CD4-positive, alpha-beta memory T cell (primary cell): ENCODE measurements at regions of chr13 and their contacts with region 1.

Region 1: DNA sequence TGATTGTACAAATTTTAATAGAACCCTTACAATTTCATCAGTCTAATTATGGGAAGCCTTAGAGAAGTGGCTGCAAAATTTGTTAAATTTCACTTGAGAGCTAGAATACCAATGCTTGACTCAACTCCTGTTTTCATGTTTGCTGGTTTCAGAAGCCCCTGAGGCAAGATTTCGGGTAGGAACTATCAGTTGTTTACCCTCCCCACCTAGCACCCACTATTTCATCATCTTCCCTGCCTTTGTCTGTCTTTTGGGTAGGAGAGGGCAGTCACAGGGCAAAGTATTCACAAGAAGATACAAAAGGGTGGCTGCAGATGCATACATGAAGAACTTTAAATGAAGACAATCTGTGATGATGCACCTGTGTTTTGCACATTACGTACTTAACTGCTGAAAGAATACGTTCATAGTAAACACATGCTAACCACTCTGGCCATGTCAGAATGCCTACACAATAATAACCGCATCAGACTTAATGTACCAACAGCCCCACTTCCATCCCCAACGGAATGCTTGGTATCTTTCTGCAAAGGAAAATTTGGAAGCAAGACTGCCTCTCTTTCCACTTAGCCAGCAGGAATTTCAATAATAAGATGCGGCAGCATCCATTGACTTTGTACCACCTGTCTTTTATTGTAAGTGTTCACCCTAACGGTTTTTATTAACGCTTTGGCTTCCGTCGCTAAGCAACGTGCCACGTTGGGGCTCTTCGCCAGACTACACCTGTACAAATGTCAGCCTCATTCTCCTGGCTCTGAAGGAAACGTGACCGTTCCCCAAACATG is 30.4 kb downstream of the TPT1 start:
- DNase-seq: no peak
- H3K4me3 ChIP-seq: peak overlapping the region; percentile 47 to 56
- H3K4me3 Mint-ChIP-seq: peak overlapping the region; percentile 88 to 94 (median 91)
- H3K27ac ChIP-seq: no peak overlapping the region
- H3K27ac Mint-ChIP-seq: peak overlapping the region in 3 of 7 donors; percentile 35 to 87 (median 36)
- H3K4me1 ChIP-seq: peaks cover 19% of the 10 kb centered on the region
- H3K4me1 Mint-ChIP-seq: peaks cover 12 to 22% (median 17%) of the 10 kb centered on the region in 4 donors
- H3K27me3 ChIP-seq: no peaks in the 10 kb centered on the region
- H3K27me3 Mint-ChIP-seq: peaks cover 3 to 5% of the 10 kb centered on the region in 2 donors

Region 2: GRCh38 chr13:44969551-44970484 is 340.7 kb before region 1 on chr13:
- CTCF ChIA-PET with region 1: interaction called, 4 read pairs
- POLR2A ChIA-PET with region 1: no interaction called
- intact Hi-C with region 1: loop called (anchors 1 kb)
- DNase-seq: peak in 4 of 5 donors; percentile 13 to 28 (median 18)
- H3K4me3 ChIP-seq: no peak overlapping the region
- H3K4me3 Mint-ChIP-seq: no peak overlapping the region
- H3K27ac ChIP-seq: no peak overlapping the region
- H3K27ac Mint-ChIP-seq: no peak overlapping the region
- H3K4me1 ChIP-seq: no peaks in the 10 kb centered on the region
- H3K4me1 Mint-ChIP-seq: peaks cover 0 to 1% (median under 1%) of the 10 kb centered on the region in 4 donors
- H3K27me3 ChIP-seq: no peaks in the 10 kb centered on the region
- H3K27me3 Mint-ChIP-seq: no peaks in the 10 kb centered on the region

Region 3: DNA sequence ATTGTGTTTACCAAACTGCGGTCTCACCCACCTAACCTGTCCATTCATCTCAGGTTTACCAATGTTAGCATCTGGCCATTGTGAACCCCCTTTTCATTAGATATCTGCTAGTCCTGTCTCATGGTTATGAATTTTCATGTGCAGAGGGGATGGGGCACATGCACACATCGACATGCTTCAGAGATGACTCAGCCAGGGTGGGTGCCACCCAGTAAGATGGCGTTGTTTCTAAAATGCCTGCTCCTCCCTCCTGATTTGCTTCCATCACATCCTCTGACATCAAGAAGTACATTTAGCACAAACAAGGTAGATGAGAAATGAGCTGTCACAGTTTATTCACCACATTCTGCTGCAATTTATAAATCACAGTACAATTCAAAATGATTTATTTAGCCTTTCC is 269.9 kb before region 1 on chr13:
- CTCF ChIA-PET with region 1: interaction called, 146 read pairs
- POLR2A ChIA-PET with region 1: no interaction called
- intact Hi-C with region 1: no loop called
- DNase-seq: no peak
- H3K4me3 ChIP-seq: no peak overlapping the region
- H3K4me3 Mint-ChIP-seq: no peak overlapping the region
- H3K27ac ChIP-seq: no peak overlapping the region
- H3K27ac Mint-ChIP-seq: no peak overlapping the region
- H3K4me1 ChIP-seq: no peaks in the 10 kb centered on the region
- H3K4me1 Mint-ChIP-seq: no peaks in the 10 kb centered on the region
- H3K27me3 ChIP-seq: no peaks in the 10 kb centered on the region
- H3K27me3 Mint-ChIP-seq: peaks cover 2 to 4% of the 10 kb centered on the region in 2 donors

Region 4: DNA sequence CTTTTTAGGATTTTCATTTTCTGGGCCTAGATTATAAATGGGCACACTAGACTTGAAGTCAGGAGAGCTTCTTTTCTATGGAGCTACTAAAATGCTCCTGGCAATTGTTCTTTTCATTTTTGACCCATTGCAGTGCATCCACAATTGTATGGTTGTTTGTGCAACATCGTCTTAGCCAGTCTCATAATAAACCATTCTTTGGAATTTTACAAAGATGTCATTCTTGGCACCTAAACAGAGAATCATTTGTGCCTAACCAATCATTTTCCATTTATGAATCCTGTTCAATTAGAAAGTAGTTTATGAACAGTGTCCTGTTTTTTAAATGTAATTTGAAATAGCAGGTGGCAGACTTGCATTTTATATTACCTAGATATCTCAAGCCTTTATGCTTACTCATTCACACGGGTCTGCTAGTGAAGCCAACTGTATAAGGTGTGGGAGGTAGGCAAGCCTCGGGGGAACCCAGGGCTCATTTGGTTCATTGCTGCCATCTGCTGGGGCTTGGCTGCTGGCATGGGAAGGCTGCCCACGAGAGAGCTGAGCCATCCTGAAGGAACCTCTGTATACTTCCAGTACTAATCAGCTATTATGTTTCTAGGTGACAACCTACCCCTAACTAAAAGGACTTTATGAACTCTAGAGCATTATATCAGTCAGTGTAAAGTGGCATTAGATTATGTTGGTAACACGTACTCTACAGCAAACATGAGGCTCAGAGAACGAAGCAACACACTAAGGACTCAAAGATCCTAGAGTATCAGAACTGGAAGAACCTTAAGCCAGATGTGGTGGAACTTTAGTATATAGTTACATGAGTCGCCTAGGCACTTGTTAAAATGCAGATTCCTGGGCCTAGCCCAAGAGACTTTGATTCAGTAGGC is 29.5 kb before region 1 on chr13:
- CTCF ChIA-PET with region 1: interaction called, 11 read pairs
- POLR2A ChIA-PET with region 1: no interaction called
- intact Hi-C with region 1: no loop called
- DNase-seq: peak in 3 of 5 donors; percentile 15 to 26 (median 17)
- H3K4me3 ChIP-seq: no peak overlapping the region
- H3K4me3 Mint-ChIP-seq: no peak overlapping the region
- H3K27ac ChIP-seq: no peak overlapping the region
- H3K27ac Mint-ChIP-seq: no peak overlapping the region
- H3K4me1 ChIP-seq: no peaks in the 10 kb centered on the region
- H3K4me1 Mint-ChIP-seq: peaks cover 0 to 2% (median 0%) of the 10 kb centered on the region in 4 donors
- H3K27me3 ChIP-seq: no peaks in the 10 kb centered on the region
- H3K27me3 Mint-ChIP-seq: no peaks in the 10 kb centered on the region

Region 5: DNA sequence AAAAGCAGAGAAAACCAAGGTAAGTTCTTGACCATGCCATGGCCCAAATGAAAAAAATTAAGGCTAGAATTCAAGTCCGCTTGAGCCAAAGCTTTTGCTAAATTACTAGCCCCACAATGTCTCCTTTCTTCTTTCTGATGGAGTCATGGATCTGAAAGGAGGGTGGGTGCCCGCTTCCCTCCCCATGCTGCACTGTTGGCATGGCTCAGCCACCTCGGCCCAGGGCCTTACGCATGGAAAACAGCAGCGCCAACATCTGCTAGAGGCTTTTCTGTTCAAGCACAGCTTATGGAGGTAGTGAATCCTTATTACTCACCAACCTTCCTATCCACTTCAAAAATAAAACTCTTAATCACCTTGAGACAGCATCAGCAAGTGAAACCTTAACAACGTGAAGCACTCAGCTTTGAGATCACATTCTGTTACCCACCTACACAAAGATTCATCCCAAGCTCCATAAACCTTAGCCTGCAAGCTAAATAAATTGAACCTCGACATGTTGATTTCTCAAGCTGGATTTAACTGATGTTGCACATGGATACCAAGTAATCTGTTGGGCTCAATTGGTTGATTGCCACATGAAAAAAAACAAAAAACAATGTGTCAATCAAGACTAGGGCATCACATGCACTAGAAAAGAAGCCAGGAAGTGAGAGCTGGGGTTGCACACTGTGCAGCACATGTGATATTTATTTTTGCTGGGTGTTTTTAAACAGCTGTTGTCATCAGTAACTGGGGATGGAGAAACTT is 12.9 kb before region 1 on chr13:
- CTCF ChIA-PET with region 1: interaction called, 43 read pairs
- POLR2A ChIA-PET with region 1: interaction called, 4 read pairs
- intact Hi-C with region 1: no loop called
- DNase-seq: peak in 4 of 5 donors; percentile 45 to 56 (median 50)
- H3K4me3 ChIP-seq: no peak overlapping the region
- H3K4me3 Mint-ChIP-seq: peak overlapping the region in 6 of 8 donors; percentile 32 to 71 (median 38)
- H3K27ac ChIP-seq: peak overlapping the region; percentile 10
- H3K27ac Mint-ChIP-seq: peak overlapping the region; percentile 47 to 90 (median 81)
- H3K4me1 ChIP-seq: peaks cover 40% of the 10 kb centered on the region
- H3K4me1 Mint-ChIP-seq: peaks cover 31 to 50% (median 39%) of the 10 kb centered on the region in 4 donors
- H3K27me3 ChIP-seq: no peaks in the 10 kb centered on the region
- H3K27me3 Mint-ChIP-seq: peaks cover 1 to 3% of the 10 kb centered on the region in 2 donors

Region 6: DNA sequence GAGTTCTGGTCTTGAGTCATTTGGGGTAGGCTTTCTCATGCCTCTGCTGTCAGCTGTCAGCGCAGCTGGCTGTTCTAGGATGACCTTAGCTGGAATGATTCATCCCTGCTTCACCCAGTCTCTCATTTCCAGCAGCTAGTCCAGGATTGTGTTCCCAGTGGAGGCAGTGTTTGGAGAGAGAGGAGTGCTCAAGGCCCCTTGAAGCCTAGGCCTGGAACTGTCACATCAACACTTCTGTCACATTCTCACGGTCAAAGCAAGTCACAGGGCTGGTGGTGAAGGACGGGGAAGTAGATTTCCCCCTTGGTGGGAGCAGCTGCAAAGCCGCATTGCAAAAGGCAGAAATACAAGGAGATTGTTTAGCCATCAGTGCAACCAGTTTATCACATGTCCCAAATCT is 15.3 kb after region 1 on chr13:
- CTCF ChIA-PET with region 1: interaction called, 12 read pairs
- POLR2A ChIA-PET with region 1: no interaction called
- intact Hi-C with region 1: no loop called
- DNase-seq: no peak
- H3K4me3 ChIP-seq: no peak overlapping the region
- H3K4me3 Mint-ChIP-seq: no peak overlapping the region
- H3K27ac ChIP-seq: no peak overlapping the region
- H3K27ac Mint-ChIP-seq: peak overlapping the region in 2 of 7 donors; percentile 23 to 56
- H3K4me1 ChIP-seq: peaks cover 39% of the 10 kb centered on the region
- H3K4me1 Mint-ChIP-seq: peaks cover 16 to 51% (median 36%) of the 10 kb centered on the region in 4 donors
- H3K27me3 ChIP-seq: no peaks in the 10 kb centered on the region
- H3K27me3 Mint-ChIP-seq: no peaks in the 10 kb centered on the region

Region 7: GRCh38 chr13:45490068-45490467 is 179.5 kb after region 1 on chr13:
- CTCF ChIA-PET with region 1: no interaction called
- POLR2A ChIA-PET with region 1: no interaction called
- intact Hi-C with region 1: loop called (anchors 1 kb)
- DNase-seq: peak in 4 of 5 donors; percentile 30 to 37 (median 32)
- H3K4me3 ChIP-seq: no peak overlapping the region
- H3K4me3 Mint-ChIP-seq: no peak overlapping the region
- H3K27ac ChIP-seq: no peak overlapping the region
- H3K27ac Mint-ChIP-seq: peak overlapping the region in 2 of 7 donors; percentile 47 to 61
- H3K4me1 ChIP-seq: no peaks in the 10 kb centered on the region
- H3K4me1 Mint-ChIP-seq: peaks cover 0 to 4% (median 2%) of the 10 kb centered on the region in 4 donors
- H3K27me3 ChIP-seq: no peaks in the 10 kb centered on the region
- H3K27me3 Mint-ChIP-seq: no peaks in the 10 kb centered on the region